ENCODE measurements at regions of chr1 and their contacts with region 1.

Region 1: GRCh38 chr1:70221241-70222121 is at the start of gene SRSF11:
- DNase-seq: peak; percentile 85
- ATAC-seq: peak; percentile 96
- H3K4me3 ChIP-seq: peak within 1 kb of the TSS; percentile 74 to 78
- H3K27ac ChIP-seq: peak within 1 kb of the TSS; percentile 96
- H3K4me1 ChIP-seq: peaks cover 4 to 16% of the 10 kb centered on the region in 2 experiments; a peak in 3 of 4 replicates
- H3K27me3 ChIP-seq: no peaks in the 10 kb centered on the region
- CTCF ChIP-seq: no peak
- POLR2A ChIP-seq: peak; percentile 55
- RAD21 ChIP-seq: no peak
- total RNA-seq, gene SRSF11: 166 TPM

Region 2: GRCh38 chr1:70205434-70206118 is 15.9 kb before region 1 on chr1 and contains the start of gene LRRC40:
- CTCF ChIA-PET with region 1: no interaction called
- POLR2A ChIA-PET with region 1: interaction called, 8 read pairs
- RAD21 ChIA-PET with region 1: no interaction called
- intact Hi-C with region 1: loop called (anchors 1 kb)
- DNase-seq: peak; percentile 90
- ATAC-seq: peak; percentile 89
- H3K4me3 ChIP-seq: peak within 1 kb of the TSS; percentile 85 to 92
- H3K27ac ChIP-seq: peak within 1 kb of the TSS; percentile 78
- H3K4me1 ChIP-seq: peaks cover 9 to 17% of the 10 kb centered on the region in 2 experiments; a peak in 3 of 4 replicates
- H3K27me3 ChIP-seq: no peaks in the 10 kb centered on the region
- CTCF ChIP-seq: no peak
- POLR2A ChIP-seq: peak; percentile 67
- RAD21 ChIP-seq: no peak
- total RNA-seq, gene LRRC40: 13.4 TPM

Region 3: DNA sequence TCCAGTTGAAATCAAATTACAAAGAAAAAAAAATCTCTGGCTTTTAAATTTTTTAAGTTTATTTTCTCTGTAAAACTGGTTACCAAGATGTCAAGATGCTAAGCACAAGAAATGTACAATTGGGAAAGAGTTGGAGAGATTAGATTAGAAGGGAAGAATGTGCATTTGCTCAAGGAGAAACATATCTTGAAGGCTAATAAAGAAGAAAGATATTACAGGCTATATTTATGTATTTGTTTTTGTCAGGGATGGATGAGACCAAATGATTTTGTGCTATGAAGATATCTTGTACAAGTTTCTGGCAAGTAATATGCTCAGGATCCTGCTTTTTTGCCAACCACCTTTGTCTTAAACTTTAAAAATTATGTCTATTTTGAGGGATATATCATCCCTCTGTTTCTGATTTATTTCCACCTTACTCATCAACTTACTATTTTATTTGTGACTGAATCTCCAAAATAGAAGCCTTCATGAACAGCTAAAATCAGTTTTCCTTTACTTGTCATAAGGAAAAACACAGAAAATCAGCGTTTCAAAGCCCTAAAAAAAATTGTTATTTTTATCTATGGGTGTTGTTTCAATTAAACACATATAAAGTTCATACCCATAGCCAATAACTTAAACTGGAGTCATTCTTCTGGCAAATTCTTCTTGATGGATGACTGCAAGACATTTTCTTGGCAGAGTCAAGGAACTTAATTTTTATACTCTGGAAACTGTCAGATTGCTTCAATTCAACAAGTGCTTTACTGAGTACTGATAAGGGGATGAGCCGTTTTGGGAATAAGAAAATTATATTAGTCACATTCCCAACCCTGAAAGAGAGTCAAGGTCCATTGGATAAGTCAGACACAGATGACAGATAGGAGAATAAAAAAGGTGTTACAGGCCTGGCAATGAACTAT is 331.4 kb after region 1 on chr1:
- CTCF ChIA-PET with region 1: no interaction called
- POLR2A ChIA-PET with region 1: no interaction called
- RAD21 ChIA-PET with region 1: no interaction called
- intact Hi-C with region 1: no loop called
- DNase-seq: no peak
- ATAC-seq: no peak
- H3K4me3 ChIP-seq: no peak overlapping the region
- H3K27ac ChIP-seq: no peak overlapping the region
- H3K4me1 ChIP-seq: no peaks in the 10 kb centered on the region
- H3K27me3 ChIP-seq: peaks cover 69% of the 10 kb centered on the region
- CTCF ChIP-seq: no peak
- POLR2A ChIP-seq: no peak
- RAD21 ChIP-seq: no peak

Measured in HCT116 (cell line).